Right ventricle myocardium inferior (tissue), 1 donor: ENCODE measurements at regions of chr1 and their contacts with region 1.

Region 1: DNA sequence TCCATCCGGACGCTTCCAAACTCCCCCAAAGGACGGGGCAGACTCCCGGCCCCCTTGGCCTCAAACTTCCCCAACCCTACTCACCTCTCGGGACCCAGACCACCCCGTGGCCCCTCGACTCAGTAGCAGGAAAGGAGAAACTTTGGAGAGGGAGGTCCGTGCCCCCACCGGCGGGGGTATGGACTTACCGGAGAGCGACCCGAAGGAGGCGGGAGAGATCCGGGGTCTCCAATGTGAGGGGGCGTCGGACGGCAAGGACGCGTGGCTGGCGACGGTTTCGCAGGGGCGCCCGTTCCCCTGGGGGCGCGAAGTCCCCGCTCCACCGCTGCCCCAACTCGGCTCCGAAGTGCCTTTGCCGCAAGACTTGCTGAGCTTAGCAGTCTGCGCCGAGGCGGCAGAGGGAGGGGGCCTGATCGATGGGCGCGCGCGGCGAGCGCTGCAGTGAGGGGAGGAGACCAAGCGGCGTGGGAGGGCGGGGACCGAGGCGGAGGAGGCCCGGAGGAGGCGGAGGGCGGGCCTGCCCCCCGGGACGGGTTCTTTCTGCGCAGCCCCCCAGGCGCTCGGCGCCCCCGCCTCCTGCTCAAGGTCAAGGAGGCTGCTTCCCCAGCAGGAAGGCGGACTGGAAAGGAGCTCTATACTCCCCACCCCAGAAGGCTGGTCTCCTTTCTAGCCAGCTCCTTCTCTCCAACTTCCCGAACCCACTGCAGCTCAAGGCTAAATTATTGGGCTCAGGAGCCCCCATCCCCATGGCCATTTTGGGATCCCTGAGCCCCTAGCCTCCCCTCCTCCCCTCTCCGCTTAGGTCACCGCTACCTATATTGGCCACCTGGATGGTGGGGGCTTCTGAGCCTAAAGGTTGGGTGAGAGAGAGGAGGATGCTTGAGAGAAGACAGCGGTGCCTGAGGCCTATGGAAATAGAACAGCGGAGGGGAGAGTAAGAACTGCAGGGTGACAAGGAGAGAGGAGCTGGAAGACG is at the start of gene SYT2:
- DNase-seq: no peak
- ATAC-seq: no peak
- total RNA-seq, gene SYT2: not detected

Region 2: GRCh38 chr1:202462342-202463076 is 247.8 kb before region 1 on chr1:
- intact Hi-C with region 1: loop called (anchors 10 kb)
- DNase-seq: no peak
- ATAC-seq: peak; percentile 80

Region 3: DNA sequence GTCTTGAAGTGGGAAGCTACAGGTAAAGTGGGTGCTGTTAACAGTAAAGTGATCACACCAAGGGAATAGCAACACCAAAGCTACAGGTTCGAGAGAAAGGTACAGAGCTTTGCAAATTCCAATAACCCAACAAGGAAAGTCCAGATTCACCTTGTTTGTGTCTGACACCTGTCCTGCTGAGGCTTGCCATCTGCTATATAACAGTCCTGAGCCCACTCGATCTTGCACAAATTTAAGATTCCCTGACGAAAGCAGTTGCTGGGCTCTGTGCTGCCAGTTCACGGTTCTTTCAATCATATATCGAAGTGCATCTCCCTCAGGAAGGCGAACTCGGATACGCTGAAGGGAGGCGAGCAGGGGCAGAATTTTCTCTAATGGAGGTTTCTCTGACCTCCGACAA is 22.9 kb after region 1 on chr1:
- intact Hi-C with region 1: no loop called
- DNase-seq: no peak
- ATAC-seq: no peak

Region 4: DNA sequence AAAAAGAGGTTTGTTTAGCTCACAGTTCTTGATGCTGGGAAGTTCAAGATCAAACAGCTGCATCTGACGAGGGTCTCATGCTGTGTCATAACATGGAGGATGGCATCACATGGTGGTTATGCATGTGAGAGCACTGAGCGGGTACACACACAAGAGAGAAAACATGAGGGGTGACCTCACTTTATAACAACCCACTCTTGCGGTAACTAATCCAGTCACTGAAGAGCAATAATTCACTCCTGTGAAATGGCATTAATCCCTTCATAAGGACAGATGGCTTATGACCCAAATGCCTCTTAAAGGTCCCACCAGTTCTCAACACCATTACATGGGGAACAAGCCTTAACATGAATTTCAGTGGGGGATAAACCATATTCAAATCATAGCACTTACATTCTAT is 542.3 kb after region 1 on chr1:
- intact Hi-C with region 1: no loop called
- DNase-seq: no peak
- ATAC-seq: no peak

Region 5: GRCh38 chr1:203711251-203712007 is 1001.1 kb after region 1 on chr1:
- intact Hi-C with region 1: no loop called
- DNase-seq: no peak
- ATAC-seq: peak; percentile 58